CD4-positive, alpha-beta T cell (primary cell): ENCODE measurements at regions of chr10 and their contacts with region 1.

Region 1: GRCh38 chr10:2173327-2173726 is 436.0 kb upstream of the ADARB2 start:
- DNase-seq: no peak
- ATAC-seq: no peak
- H3K4me3 ChIP-seq: no peak overlapping the region
- H3K4me3 Mint-ChIP-seq: no peak overlapping the region
- H3K27ac ChIP-seq: no peak overlapping the region
- H3K27ac Mint-ChIP-seq: no peak overlapping the region
- H3K4me1 ChIP-seq: no peaks in the 10 kb centered on the region
- H3K4me1 Mint-ChIP-seq: no peaks in the 10 kb centered on the region
- H3K27me3 ChIP-seq: no peaks in the 10 kb centered on the region
- H3K27me3 Mint-ChIP-seq: peaks cover 9% of the 10 kb centered on the region
- CTCF ChIP-seq: no peak

Region 2: DNA sequence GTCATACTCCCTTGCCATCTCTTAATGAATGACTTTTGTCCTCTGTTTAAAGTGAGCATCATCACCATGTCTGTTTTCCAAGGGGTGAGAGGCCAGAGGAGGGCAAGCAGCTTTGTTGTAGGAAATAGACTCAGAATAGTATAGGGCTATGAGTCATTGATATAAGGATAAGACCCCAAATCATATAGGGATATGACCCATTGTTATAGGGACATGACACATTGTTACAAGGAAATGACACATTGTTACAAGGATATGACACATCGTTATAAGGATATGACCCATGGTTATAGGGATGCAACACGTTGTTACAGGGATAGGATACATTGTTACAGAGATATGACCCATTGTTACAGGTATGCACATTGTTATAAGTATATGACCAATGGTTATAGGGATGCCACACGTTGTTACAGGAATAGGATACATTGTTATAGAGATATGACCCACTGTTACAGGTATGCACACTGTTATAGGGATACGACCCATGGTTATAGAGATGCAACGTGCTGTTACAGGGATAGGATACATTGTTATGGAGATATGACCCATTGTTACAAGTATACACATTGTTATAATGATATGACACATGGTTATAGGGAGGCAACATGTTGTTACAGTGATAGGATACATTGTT is 124.9 kb before region 1 on chr10:
- CTCF ChIA-PET with region 1: no interaction called
- POLR2A ChIA-PET with region 1: no interaction called
- intact Hi-C with region 1: no loop called
- DNase-seq: no peak
- ATAC-seq: no peak
- H3K4me3 ChIP-seq: no peak overlapping the region
- H3K4me3 Mint-ChIP-seq: no peak overlapping the region
- H3K27ac ChIP-seq: no peak overlapping the region
- H3K27ac Mint-ChIP-seq: no peak overlapping the region
- H3K4me1 ChIP-seq: no peaks in the 10 kb centered on the region
- H3K4me1 Mint-ChIP-seq: no peaks in the 10 kb centered on the region
- H3K27me3 ChIP-seq: no peaks in the 10 kb centered on the region
- H3K27me3 Mint-ChIP-seq: no peaks in the 10 kb centered on the region
- CTCF ChIP-seq: no peak

Region 3: DNA sequence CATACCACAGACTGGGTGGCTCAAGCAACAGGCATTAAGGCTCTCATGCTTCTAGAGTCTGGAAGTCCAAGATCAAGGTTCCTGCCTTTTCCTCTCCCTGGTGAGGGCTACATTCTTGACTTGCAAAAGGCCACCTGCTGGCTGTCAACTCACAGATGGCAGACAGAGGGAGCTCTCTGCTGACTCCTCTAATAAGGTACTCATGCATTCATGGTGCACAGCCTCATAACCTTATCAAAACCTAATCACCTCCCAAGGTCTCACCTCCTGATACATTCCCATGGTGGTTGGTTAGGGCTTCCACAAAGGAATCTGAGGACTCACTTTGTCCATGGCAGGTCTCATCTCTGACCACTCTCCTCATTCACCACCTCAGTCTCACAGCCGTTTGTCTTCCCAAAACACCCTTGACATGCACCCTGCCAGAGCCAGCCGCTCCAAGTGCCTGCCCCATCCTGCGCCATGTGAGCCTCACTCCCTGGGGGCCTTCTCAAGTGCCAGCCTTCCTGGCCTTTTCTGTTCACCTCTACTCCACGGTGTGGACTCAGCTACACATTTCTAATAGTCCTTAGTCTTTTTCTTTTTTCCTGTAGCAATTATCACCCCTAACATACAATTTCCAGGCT is 35.7 kb before region 1 on chr10:
- CTCF ChIA-PET with region 1: no interaction called
- POLR2A ChIA-PET with region 1: no interaction called
- intact Hi-C with region 1: loop called in 1 of 2 experiments (anchors 1 kb)
- DNase-seq: peak in 2 of 14 experiments; percentile 5 to 14
- ATAC-seq: no peak
- H3K4me3 ChIP-seq: no peak overlapping the region
- H3K4me3 Mint-ChIP-seq: no peak overlapping the region
- H3K27ac ChIP-seq: no peak overlapping the region
- H3K27ac Mint-ChIP-seq: no peak overlapping the region
- H3K4me1 ChIP-seq: no peaks in the 10 kb centered on the region
- H3K4me1 Mint-ChIP-seq: no peaks in the 10 kb centered on the region
- H3K27me3 ChIP-seq: no peaks in the 10 kb centered on the region
- H3K27me3 Mint-ChIP-seq: no peaks in the 10 kb centered on the region
- CTCF ChIP-seq: no peak

Region 4: GRCh38 chr10:2236876-2237275 is 63.5 kb after region 1 on chr10:
- CTCF ChIA-PET with region 1: no interaction called
- POLR2A ChIA-PET with region 1: no interaction called
- intact Hi-C with region 1: no loop called
- DNase-seq: no peak
- ATAC-seq: no peak
- H3K4me3 ChIP-seq: no peak overlapping the region
- H3K4me3 Mint-ChIP-seq: no peak overlapping the region
- H3K27ac ChIP-seq: no peak overlapping the region
- H3K27ac Mint-ChIP-seq: no peak overlapping the region
- H3K4me1 ChIP-seq: no peaks in the 10 kb centered on the region
- H3K4me1 Mint-ChIP-seq: no peaks in the 10 kb centered on the region
- H3K27me3 ChIP-seq: no peaks in the 10 kb centered on the region
- H3K27me3 Mint-ChIP-seq: no peaks in the 10 kb centered on the region
- CTCF ChIP-seq: no peak

Region 5: DNA sequence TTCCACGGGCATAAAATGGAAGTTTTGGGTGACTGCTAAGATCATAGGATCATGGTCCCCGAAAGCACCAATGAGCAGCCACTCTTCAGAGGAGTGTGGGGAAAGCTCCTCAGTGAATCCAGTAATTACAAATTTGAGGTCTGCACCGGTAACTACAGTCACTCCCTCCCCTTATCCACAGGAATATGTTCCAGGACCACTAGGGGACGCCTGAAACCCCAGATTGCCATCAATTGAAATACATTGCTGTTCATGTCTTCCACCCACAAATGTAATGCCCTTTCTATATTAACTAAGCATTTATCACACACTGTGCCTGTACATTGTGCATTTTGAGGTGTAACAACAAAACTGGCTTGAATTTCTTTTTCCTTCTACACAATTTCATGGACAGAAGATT is 446.1 kb after region 1 on chr10:
- CTCF ChIA-PET with region 1: no interaction called
- POLR2A ChIA-PET with region 1: no interaction called
- intact Hi-C with region 1: no loop called
- DNase-seq: no peak
- ATAC-seq: no peak
- H3K4me3 ChIP-seq: no peak overlapping the region
- H3K4me3 Mint-ChIP-seq: no peak overlapping the region
- H3K27ac ChIP-seq: no peak overlapping the region
- H3K27ac Mint-ChIP-seq: no peak overlapping the region
- H3K4me1 ChIP-seq: no peaks in the 10 kb centered on the region
- H3K4me1 Mint-ChIP-seq: no peaks in the 10 kb centered on the region
- H3K27me3 ChIP-seq: no peaks in the 10 kb centered on the region
- H3K27me3 Mint-ChIP-seq: no peaks in the 10 kb centered on the region
- CTCF ChIP-seq: no peak

Region 6: GRCh38 chr10:3095373-3096139 is 922.2 kb after region 1 on chr10:
- CTCF ChIA-PET with region 1: no interaction called
- POLR2A ChIA-PET with region 1: no interaction called
- intact Hi-C with region 1: no loop called
- DNase-seq: peak in 5 of 14 experiments; percentile 9 to 74 (median 67)
- ATAC-seq: peak; percentile 69
- H3K4me3 ChIP-seq: peak overlapping the region; percentile 12
- H3K4me3 Mint-ChIP-seq: no peak overlapping the region
- H3K27ac ChIP-seq: no peak overlapping the region
- H3K27ac Mint-ChIP-seq: peak overlapping the region; percentile 7
- H3K4me1 ChIP-seq: peaks cover 35% of the 10 kb centered on the region
- H3K4me1 Mint-ChIP-seq: peaks cover 46% of the 10 kb centered on the region
- H3K27me3 ChIP-seq: no peaks in the 10 kb centered on the region
- H3K27me3 Mint-ChIP-seq: no peaks in the 10 kb centered on the region
- CTCF ChIP-seq: no peak